Ascending aorta (tissue), 2 donors: ENCODE measurements at regions of chr2 and their contacts with region 1.

Region 1: DNA sequence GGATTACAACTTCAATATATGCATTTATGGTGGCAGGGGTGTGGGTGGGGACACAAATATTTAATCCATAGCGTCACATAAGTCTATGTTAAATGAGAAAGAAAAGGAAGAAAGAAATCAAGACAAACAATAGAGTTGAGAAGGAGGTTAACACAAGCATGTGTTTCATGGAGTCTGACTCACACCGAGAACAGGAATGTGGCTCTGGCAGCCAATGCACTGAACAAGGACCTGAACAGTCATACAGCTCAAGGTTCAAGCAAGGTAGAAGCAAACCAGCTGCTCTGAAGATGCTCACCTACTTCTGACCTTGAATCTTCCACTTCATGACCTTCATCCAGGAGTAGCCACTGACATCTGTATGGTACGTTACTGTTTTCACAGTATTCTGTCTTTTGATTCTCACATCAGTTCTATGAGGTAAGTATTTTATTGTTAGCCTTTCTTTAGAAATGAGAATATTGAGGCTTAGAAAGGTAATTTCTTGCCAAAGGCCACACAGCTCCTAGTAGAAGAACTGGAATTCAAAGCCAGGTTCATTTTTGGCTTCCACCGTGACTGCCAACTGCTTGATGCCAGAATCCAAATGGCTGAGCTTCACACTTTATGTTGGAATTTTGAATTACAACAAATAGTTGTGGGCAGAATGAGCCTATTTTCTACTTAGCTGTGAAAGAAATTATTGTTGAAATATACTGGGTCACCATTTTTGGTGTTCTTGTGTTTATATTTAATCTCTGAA is 36.0 kb upstream of the LPIN1 start:
- DNase-seq: peak in 1 of 2 donors; percentile 77
- H3K4me3 ChIP-seq: no peak overlapping the region
- H3K27ac ChIP-seq: peak overlapping the region; percentile 58 to 73
- H3K4me1 ChIP-seq: peaks cover 4 to 12% of the 10 kb centered on the region in 2 donors
- H3K27me3 ChIP-seq: no peaks in the 10 kb centered on the region
- CTCF ChIP-seq: no peak

Region 2: DNA sequence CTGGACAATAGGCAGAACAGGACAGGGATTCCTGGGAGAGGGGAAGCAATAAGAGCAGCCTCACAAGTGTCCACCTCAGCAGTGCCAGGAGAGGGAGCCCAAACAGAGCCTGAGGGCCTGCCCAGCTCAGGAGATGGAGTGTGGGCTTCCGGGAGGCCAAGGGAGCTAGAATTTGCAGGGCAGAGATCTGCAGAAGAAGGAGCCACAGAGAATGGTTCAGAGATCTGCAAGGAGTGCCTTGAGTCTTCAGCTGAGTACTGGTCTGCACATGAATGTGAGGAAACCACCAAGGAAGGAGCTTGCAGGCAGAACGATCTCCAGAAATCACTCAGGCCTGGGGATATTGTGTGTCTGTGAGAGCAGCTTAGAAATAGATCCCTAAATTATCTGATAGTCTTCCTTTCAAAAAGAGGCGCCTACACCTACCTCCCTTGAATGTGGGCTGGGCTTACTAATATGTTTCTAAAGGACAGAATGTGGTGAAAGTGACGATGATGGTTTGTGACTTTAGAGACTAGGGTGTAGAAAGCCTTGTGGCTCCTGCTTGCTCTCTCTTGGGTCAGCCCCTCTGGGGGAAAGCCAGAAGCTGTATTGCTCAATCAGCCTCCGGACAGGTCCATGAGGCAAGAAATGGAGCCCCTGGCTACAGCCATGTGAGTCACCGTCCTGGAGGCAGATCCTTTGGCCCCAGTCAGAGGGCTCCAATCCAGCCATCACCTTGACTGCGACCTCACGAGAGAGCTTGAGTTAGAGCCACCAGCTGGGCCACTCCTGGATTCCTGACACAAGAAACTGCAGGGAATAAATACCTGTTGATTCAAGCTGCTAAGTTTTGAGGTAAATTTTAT is 28.4 kb after region 1 on chr2:
- intact Hi-C with region 1: loop called (anchors 2 kb)
- DNase-seq: peak; percentile 64 to 94
- H3K4me3 ChIP-seq: no peak overlapping the region
- H3K27ac ChIP-seq: peak overlapping the region; percentile 63 to 65
- H3K4me1 ChIP-seq: no peaks in the 10 kb centered on the region
- H3K27me3 ChIP-seq: no peaks in the 10 kb centered on the region
- CTCF ChIP-seq: peak in 1 of 3 experiments; percentile 27

Region 3: GRCh38 chr2:11753886-11754699 is 43.7 kb after region 1 on chr2:
- intact Hi-C with region 1: no loop called
- DNase-seq: peak in 1 of 2 donors; percentile 70
- H3K4me3 ChIP-seq: peak overlapping the region; percentile 14 to 16
- H3K27ac ChIP-seq: peak overlapping the region; percentile 17 to 57
- H3K4me1 ChIP-seq: peaks cover 0 to 17% of the 10 kb centered on the region in 2 donors
- H3K27me3 ChIP-seq: no peaks in the 10 kb centered on the region
- CTCF ChIP-seq: no peak